Adrenal gland (tissue), 19 donors: ENCODE measurements at regions of chr12 and their contacts with region 1.

Region 1: GRCh38 chr12:112198120-112198733 is 72.9 kb downstream of the TRAFD1 start:
- DNase-seq: peak; percentile 33 to 82 (median 61)
- H3K4me3 ChIP-seq: no peak overlapping the region
- H3K27ac ChIP-seq: no peak overlapping the region
- H3K4me1 ChIP-seq: no peaks in the 10 kb centered on the region
- H3K27me3 ChIP-seq: no peaks in the 10 kb centered on the region
- CTCF ChIP-seq: peak; percentile 28 to 66 (median 53)
- POLR2A ChIP-seq: no peak

Region 2: GRCh38 chr12:112382232-112382796 is 184.1 kb after region 1 on chr12 and contains the start of gene HECTD4:
- intact Hi-C with region 1: loop called (anchors 5 to 10 kb)
- DNase-seq: peak; percentile 93 to 98 (median 96)
- H3K4me3 ChIP-seq: peak within 1 kb of the TSS; percentile 54 to 97 (median 80)
- H3K27ac ChIP-seq: peak within 1 kb of the TSS; percentile 60 to 90 (median 75)
- H3K4me1 ChIP-seq: peaks cover 5 to 16% of the 10 kb centered on the region in 2 donors
- H3K27me3 ChIP-seq: no peaks in the 10 kb centered on the region
- CTCF ChIP-seq: no peak
- POLR2A ChIP-seq: peak; percentile 46 to 76
- total RNA-seq, gene HECTD4: 17.5 to 42.9 (median 28.2) TPM